ENCODE measurements at regions of chr5 and their contacts with region 1.

Region 1: DNA sequence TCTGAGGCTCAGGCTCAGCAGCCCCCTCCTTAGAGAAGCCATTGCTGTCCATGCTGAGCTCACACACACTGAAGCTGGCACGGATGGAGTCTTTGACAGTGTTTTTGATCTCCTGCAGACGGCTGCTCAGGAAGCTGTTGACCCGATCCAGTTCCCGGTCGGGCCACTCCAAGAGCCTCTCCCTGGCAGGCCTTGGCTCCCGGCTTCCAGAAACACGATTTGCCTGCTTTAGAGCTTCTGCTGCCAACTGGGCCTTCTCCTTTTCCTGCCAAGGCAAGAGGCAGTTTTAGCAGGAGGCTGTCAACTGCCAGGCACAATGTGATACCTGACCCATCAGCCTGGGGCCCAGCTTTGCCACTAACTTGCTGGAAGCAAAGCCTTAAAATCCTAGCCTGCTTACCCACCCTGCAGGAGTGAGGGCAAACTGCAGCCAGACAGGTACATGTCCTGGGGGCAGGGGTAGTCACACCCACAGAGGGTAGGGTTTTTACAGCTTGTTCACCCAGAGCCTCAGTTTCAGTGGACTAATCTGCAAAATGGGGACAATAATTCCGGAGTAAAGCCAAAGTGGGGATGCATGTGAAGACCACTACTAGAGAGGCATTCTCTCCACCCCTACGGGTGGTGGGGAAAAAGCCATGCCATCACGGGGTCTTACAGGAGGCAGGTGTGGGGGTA is 8.3 kb upstream of the DDX41 start:
- DNase-seq: no peak
- H3K4me3 ChIP-seq: no peak overlapping the region
- H3K27ac ChIP-seq: no peak overlapping the region
- H3K4me1 ChIP-seq: no peaks in the 10 kb centered on the region
- H3K27me3 ChIP-seq: no peaks in the 10 kb centered on the region
- CTCF ChIP-seq: no peak
- EP300 ChIP-seq: no peak
- POLR2A ChIP-seq: no peak
- RAD21 ChIP-seq: peak in 1 of 2 experiments; percentile 2; a peak in 1 of 4 replicates

Region 2: GRCh38 chr5:177546258-177546741 is 21.2 kb after region 1 on chr5:
- CTCF ChIA-PET with region 1: interaction called, 12 read pairs
- POLR2A ChIA-PET with region 1: interaction called, 3 read pairs
- DNase-seq: peak in 1 of 2 experiments; percentile 31
- H3K4me3 ChIP-seq: no peak overlapping the region
- H3K27ac ChIP-seq: no peak overlapping the region
- H3K4me1 ChIP-seq: no peaks in the 10 kb centered on the region
- H3K27me3 ChIP-seq: no peaks in the 10 kb centered on the region
- CTCF ChIP-seq: no peak
- EP300 ChIP-seq: no peak
- POLR2A ChIP-seq: no peak
- RAD21 ChIP-seq: no peak